Cardiac septum (tissue), 1 donor: ENCODE measurements at regions of chr3 and their contacts with region 1.

Region 1: DNA sequence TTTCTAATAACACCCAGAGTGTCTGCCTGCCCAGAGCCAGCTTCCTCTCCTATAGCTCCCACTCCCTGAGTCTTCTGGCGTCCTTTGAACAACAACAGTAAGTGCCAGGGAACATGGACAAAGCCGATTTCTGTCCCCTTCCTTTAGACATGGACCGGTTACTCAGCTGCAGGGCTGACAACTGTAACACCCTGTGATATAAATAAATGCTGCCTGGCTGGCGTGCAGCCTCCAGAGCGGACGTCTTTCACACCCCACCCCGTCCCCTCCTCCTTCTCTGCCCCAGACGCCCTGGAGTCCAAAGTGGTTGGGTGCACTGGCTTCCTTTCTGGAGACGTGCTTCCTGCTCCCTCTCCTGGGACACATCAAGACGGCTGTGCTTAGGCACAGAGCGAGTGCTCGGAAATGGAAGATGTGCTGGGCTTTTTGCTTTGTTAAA is 281.9 kb upstream of the LRRFIP2 start:
- DNase-seq: peak; percentile 91

Region 2: DNA sequence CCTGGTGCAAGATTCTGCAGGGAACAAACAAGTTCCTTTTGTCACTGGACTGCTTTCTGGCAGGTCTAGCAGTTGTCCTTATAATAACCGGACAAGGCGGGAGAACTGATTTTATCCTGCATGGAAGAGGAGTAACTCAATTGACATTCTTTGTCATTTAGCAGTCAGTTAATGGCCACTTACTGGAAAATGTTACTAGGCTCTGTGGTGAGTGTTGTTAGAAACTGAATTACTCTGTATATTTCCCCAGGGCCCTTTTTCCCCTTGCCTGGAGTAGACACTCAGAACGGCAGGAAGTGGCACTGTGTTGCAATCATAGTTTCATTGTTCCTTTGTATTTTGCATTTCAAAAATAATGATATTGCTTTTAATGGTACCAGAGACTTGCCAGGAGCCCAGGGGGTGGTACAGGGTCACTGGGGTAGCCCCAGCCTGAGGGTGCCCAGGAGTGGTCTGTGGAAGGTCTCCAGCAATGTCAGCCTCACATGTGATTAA is 36.7 kb after region 1 on chr3:
- intact Hi-C with region 1: loop called (anchors 1 kb)
- DNase-seq: no peak

Region 3: DNA sequence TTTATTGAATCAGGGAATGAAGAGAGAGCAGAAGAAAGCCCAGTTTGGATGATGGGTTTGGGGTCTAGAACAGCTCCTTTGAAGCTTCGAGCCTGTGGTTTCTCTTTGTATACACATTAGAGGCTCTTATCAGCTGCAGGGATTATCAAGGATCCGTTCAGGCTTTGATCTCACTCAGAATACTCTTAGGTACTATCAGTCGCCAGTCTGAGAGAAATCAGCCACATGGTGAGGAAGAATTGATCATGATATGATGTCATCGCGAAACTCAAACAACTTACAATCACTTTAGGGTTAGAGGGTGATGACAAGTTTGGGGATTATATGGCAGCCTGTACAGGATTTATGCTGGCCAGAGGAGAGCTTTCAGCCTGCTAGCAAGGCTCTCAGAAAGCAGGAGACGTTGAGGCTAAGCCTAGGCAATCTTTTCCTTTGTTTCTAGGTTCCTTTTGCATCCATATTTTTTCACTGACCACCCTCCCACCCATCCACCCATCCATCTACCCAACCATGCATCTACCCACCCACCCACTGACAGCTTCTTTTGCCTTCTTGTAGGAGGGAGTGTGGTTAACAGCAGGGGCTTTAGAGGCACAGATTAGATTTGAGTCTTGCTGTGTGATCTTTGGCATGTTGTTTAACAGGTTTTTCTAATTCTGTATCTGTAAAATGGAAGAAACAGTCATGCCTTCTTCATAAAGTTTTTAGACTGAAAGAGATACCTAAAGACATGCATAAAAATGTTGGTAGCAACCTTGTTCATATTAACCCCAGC is 48.5 kb after region 1 on chr3:
- intact Hi-C with region 1: loop called (anchors 5 kb)
- DNase-seq: no peak

Region 4: GRCh38 chr3:37526511-37526910 is 70.2 kb after region 1 on chr3:
- intact Hi-C with region 1: loop called (anchors 1 kb)
- DNase-seq: peak; percentile 91

Region 5: GRCh38 chr3:37590328-37591079 is 134.2 kb after region 1 on chr3:
- intact Hi-C with region 1: loop called (anchors 5 kb)
- DNase-seq: no peak